ENCODE measurements at regions of chr2 and their contacts with region 1.

Region 1: GRCh38 chr2:175036582-175037018 is 31.4 kb upstream of the CHN1 start:
- DNase-seq: peak; percentile 60
- ATAC-seq: peak; percentile 44
- H3K4me3 ChIP-seq: peak overlapping the region in 2 of 3 experiments; percentile 15 to 50; a peak in 3 of 6 replicates
- H3K27ac ChIP-seq: no peak overlapping the region
- H3K4me1 ChIP-seq: peaks cover 40% of the 10 kb centered on the region
- H3K27me3 ChIP-seq: no peaks in the 10 kb centered on the region
- CTCF ChIP-seq: peak; percentile 77
- EP300 ChIP-seq: no peak
- POLR2A ChIP-seq: no peak
- RAD21 ChIP-seq: peak; percentile 45; the same call in 1 of the 2 replicates

Region 2: DNA sequence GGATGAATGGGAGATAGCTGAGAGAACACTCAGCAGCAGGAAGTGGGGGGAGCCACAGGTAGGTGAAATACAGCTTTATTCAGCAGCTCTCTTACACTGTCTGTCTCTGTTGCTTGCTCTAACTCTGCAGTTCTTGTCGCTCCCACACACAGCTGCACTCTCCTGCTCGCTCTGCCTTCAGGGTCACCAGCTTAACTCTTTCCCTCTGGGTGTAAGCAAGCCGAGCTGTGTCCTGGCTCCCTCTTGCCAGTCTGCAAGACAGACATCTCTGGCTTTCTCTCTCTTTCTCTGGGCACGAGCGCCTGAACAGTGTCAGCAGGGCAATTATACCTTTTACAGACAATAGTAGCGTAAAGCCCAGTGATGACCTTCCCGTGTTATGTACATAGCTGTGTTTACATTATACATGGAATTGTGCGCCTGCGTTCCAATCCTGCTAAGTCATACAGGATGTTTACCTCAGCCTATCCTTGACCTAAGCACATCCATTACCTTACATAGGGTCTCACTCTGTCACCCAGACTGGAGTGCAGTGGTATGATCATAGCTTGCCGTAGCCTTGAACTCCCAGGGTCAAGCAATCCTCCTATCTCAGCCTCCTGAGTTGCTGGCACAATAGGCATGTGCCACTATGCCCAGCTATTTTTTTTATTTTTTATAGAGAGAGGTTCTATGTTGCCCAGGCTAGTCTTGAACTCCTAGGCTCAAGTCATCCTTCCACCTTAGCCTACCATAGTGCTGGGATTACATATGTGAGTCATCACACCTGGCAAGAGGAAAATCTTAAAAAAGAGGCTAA is 26.4 kb after region 1 on chr2:
- CTCF ChIA-PET with region 1: no interaction called
- POLR2A ChIA-PET with region 1: interaction called, 12 read pairs
- in situ Hi-C with region 1: no loop called
- intact Hi-C with region 1: loop called (anchors 2 kb)
- DNase-seq: peak; percentile 100
- ATAC-seq: peak; percentile 97
- H3K4me3 ChIP-seq: peak overlapping the region in 1 of 3 experiments; percentile 55; a peak in 2 of 6 replicates
- H3K27ac ChIP-seq: peak overlapping the region; percentile 97
- H3K4me1 ChIP-seq: peaks cover 43% of the 10 kb centered on the region
- H3K27me3 ChIP-seq: no peaks in the 10 kb centered on the region
- CTCF ChIP-seq: no peak; the same call in 1 of the 2 replicates
- EP300 ChIP-seq: peak; percentile 98
- POLR2A ChIP-seq: peak; percentile 38 to 80
- RAD21 ChIP-seq: peak; percentile 55

Region 3: GRCh38 chr2:175187378-175187777 is 150.8 kb after region 1 on chr2:
- CTCF ChIA-PET with region 1: interaction called, 3 read pairs
- POLR2A ChIA-PET with region 1: no interaction called
- in situ Hi-C with region 1: loop called (anchors 10 kb)
- intact Hi-C with region 1: loop called (anchors 1 kb)
- DNase-seq: peak; percentile 66
- ATAC-seq: peak; percentile 98
- H3K4me3 ChIP-seq: no peak overlapping the region
- H3K27ac ChIP-seq: no peak overlapping the region
- H3K4me1 ChIP-seq: 0 out of 2 replicates have a peak, but pooled peaks cover 5% of the 10 kb centered on the region
- H3K27me3 ChIP-seq: no peaks in the 10 kb centered on the region; a peak in 1 of 5 replicates
- CTCF ChIP-seq: peak; percentile 63
- EP300 ChIP-seq: no peak
- POLR2A ChIP-seq: no peak
- RAD21 ChIP-seq: 0 out of 2 replicates have a peak, but pooled peaks have one; percentile 31

Region 4: DNA sequence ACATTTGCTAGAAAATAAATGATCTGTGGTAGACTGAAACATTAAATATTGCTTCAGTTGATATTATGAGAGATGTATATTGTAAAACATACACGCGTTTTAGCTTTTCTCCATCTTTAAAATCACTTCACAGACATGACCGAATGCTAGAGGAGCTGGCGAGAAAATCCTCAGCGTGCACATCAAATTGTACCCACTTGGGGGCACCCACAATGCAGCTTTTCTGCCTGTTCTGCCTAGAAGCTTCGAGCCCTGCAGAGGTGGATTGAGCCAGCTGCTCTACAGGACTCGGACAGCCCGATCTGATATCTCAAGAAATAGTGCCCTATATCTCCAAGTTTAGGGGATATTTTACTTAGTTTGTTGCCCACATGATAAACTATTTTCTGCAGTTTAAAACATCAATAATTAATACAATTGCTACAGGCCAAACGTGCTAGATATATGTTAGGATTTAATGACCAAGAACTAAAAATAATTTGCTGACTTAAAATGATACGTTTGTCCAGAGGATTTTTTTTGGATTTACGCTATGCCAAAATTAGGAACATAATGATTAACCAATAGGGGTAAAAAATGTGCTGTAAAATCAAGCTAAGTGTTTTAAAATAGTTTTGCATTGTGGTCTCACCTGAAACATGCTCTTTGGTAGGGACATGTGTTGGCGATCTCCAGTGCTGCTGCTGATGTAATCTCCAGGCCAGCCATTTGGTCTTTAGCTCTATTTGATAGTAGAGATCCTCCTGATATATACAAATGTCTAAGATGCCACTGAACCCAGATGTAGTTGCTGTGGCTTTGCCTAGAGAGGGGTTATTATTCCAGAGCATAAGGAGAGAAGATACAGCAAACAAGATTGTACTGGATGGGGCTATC is 167.3 kb after region 1 on chr2:
- CTCF ChIA-PET with region 1: no interaction called
- POLR2A ChIA-PET with region 1: no interaction called
- in situ Hi-C with region 1: no loop called
- intact Hi-C with region 1: loop called (anchors 5 kb)
- DNase-seq: peak; percentile 50
- ATAC-seq: peak; percentile 100
- H3K4me3 ChIP-seq: no peak overlapping the region
- H3K27ac ChIP-seq: no peak overlapping the region
- H3K4me1 ChIP-seq: no peaks in the 10 kb centered on the region
- H3K27me3 ChIP-seq: peaks cover 0 to 7% of the 10 kb centered on the region in 2 experiments; a peak in 1 of 5 replicates
- CTCF ChIP-seq: peak; percentile 79
- EP300 ChIP-seq: no peak
- POLR2A ChIP-seq: no peak
- RAD21 ChIP-seq: peak; percentile 62

Measured in HepG2 (cell line).